ENCODE measurements at regions of chr15 and their contacts with region 1.

Region 1: GRCh38 chr15:73927476-73928240 is 1.4 kb downstream of the LOXL1 start:
- DNase-seq: peak; percentile 85
- ATAC-seq: peak; percentile 91
- H3K4me3 Mint-ChIP-seq: peak overlapping the region; percentile 66
- H3K27ac Mint-ChIP-seq: peak overlapping the region; percentile 71
- H3K4me1 Mint-ChIP-seq: peaks cover 71% of the 10 kb centered on the region
- H3K27me3 Mint-ChIP-seq: no peaks in the 10 kb centered on the region

Region 2: DNA sequence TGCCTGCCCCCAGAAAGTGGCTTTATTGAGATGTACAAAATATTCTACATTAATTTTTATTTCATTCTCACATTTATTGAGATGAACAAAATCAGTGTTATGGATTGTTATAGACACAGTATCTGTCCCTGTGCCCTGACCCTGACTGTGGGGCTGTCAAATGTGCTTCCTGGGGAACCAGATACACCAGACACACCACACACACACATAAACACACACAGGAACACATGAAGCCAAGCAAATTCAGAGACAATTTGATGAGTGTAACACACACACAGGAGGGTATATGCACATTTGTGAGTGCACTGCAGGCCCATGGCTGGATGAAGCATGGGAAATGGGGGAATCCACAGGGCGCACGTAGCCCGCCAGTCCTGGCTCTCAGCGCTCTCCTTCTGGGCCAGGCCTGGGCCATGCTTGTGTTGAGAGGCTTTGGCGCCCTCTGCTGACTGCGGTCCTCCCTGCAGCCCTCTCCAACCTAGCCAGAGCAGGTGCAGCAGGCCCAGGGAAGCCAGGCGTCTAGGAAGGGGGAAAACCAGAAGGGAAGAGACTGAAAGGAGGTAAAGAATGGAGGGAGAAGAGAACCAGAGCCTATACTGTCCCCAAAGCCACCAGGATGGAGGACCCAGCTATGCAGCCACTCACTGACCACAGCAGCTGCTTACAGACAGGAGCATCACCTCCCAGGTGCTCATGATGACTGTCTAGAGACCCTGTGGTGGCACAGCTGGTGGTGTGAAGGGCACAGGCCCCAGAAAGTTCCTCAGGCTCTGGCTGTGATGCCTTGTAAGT is 19.4 kb before region 1 on chr15:
- CTCF ChIA-PET with region 1: interaction called, 54 read pairs
- POLR2A ChIA-PET with region 1: interaction called, 6 read pairs
- DNase-seq: peak; percentile 87
- ATAC-seq: peak; percentile 99
- H3K4me3 Mint-ChIP-seq: no peak overlapping the region
- H3K27ac Mint-ChIP-seq: peak overlapping the region; percentile 37
- H3K4me1 Mint-ChIP-seq: peaks cover 27% of the 10 kb centered on the region
- H3K27me3 Mint-ChIP-seq: no peaks in the 10 kb centered on the region

Region 3: GRCh38 chr15:73941871-73942635 is 14.4 kb after region 1 on chr15:
- CTCF ChIA-PET with region 1: interaction called, 14 read pairs
- POLR2A ChIA-PET with region 1: no interaction called
- DNase-seq: peak; percentile 57
- ATAC-seq: peak; percentile 55
- H3K4me3 Mint-ChIP-seq: peak overlapping the region; percentile 5
- H3K27ac Mint-ChIP-seq: peak overlapping the region; percentile 60
- H3K4me1 Mint-ChIP-seq: peaks cover 22% of the 10 kb centered on the region
- H3K27me3 Mint-ChIP-seq: no peaks in the 10 kb centered on the region

Region 4: DNA sequence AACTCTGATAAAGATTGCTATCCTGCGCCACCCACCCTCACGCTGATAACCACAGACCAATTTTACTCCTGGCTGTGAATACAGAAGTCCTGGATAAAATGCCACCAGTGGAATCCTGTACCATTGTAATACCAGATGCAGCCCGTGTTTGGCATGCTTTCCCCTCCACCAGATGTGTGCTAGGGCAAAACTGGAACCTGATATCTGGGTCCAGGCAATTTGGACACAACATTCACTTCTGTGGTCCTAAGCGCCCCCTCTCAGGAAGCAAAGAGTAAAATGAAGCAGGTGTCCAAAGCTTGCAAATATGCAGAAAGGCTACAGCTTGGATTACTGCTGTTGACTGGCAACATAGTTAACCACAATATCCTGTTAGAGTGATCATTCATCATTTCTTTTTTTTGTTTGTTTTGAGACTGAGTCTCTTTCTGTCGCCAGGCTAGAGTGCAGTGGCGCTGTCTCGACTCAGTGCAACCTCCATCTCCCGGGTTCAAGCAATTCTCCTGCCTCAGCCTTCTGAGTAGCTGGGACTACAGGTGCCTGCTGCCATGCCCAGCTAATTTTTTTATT is 31.4 kb after region 1 on chr15:
- CTCF ChIA-PET with region 1: interaction called, 20 read pairs
- POLR2A ChIA-PET with region 1: no interaction called
- DNase-seq: peak; percentile 66
- ATAC-seq: peak; percentile 95
- H3K4me3 Mint-ChIP-seq: peak overlapping the region; percentile 52
- H3K27ac Mint-ChIP-seq: peak overlapping the region; percentile 85
- H3K4me1 Mint-ChIP-seq: peaks cover 35% of the 10 kb centered on the region
- H3K27me3 Mint-ChIP-seq: no peaks in the 10 kb centered on the region

Measured in activated CD8-positive, alpha-beta T cell treated with anti-CD3 and anti-CD28 coated beads, Interleukin-2, amount 10 ng/mL, durations not matched to agents 7 days and 5 days (primary cell).